Right cardiac atrium (tissue), 5 donors: ENCODE measurements at regions of chr11 and their contacts with region 1.

Region 1: GRCh38 chr11:95337175-95337957 is 106.4 kb upstream of the SESN3 start:
- DNase-seq: peak; percentile 71 to 93 (median 89)
- ATAC-seq: peak; percentile 75 to 83
- H3K4me3 ChIP-seq: peak overlapping the region; percentile 7
- H3K27ac ChIP-seq: peak overlapping the region; percentile 43
- H3K4me1 ChIP-seq: peaks cover 14% of the 10 kb centered on the region
- H3K27me3 ChIP-seq: no peaks in the 10 kb centered on the region

Region 2: DNA sequence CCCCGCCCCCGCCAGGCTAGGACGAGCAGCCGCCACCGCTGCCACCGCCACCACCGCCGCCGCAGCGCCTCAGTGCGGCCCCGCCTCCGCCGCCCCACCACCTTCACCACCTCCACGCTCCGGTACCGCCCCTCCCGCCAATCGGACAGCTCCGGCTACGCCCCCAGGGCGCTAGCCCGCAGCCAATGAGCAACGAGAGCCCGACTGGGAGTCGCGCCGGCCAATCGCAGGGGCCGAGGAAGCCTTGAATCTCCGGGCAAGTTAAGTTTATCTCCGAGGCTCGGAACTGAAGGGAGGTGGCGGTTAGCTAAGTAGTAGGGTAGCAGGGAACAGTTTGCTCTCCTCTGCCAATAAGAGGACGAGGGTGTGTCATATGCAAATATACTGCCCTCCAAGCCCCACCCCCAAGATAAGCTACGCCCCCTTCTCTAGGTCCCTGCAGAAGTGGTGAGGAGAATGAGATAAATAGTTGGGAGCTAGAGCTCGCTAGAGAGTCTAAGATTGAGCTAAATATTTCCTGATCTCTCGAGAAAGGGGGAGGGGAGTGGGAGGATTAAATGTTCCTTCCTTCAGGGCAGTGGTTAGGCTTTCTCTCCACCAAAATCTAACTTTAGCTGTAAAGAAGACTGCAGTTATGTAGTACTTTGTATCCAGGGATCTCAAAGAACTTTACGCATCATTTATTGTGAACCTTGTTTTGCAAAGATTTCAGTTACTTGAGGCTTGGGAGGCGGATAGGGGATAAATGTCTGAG is 106.1 kb before region 1 on chr11 and contains the start of gene SESN3:
- intact Hi-C with region 1: loop called in 1 of 4 experiments (anchors 10 kb)
- DNase-seq: peak; percentile 99
- ATAC-seq: peak; percentile 98 to 99
- H3K4me3 ChIP-seq: peak within 1 kb of the TSS; percentile 93
- H3K27ac ChIP-seq: peak within 1 kb of the TSS; percentile 96
- H3K4me1 ChIP-seq: no peaks in the 10 kb centered on the region
- H3K27me3 ChIP-seq: no peaks in the 10 kb centered on the region
- total RNA-seq, gene SESN3: 9.1 to 15.3 (median 12.0) TPM

Region 3: DNA sequence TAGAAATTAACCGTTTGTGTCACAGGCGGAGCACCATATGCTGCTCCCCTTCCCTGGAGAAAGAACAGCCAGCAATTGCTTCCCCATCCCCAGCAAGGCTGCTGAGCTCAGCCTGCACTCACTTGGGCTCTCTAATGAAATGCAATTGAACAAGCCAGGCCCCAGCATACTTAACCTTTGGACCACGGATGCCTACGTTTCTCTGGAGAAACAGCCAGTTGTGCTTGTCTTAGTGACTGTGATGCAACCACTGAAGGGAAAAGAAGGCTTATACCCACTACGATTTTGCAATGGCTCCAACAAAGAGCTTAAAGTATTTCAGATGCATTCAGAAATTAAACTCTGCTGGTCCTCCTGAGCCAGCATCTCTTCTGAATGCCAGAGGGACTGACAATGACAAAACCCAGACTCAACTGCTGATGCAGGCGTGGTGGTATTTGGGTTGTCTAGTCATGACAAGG is 55.0 kb before region 1 on chr11:
- intact Hi-C with region 1: no loop called
- DNase-seq: no peak
- ATAC-seq: no peak
- H3K4me3 ChIP-seq: no peak overlapping the region
- H3K27ac ChIP-seq: no peak overlapping the region
- H3K4me1 ChIP-seq: no peaks in the 10 kb centered on the region
- H3K27me3 ChIP-seq: no peaks in the 10 kb centered on the region

Region 4: DNA sequence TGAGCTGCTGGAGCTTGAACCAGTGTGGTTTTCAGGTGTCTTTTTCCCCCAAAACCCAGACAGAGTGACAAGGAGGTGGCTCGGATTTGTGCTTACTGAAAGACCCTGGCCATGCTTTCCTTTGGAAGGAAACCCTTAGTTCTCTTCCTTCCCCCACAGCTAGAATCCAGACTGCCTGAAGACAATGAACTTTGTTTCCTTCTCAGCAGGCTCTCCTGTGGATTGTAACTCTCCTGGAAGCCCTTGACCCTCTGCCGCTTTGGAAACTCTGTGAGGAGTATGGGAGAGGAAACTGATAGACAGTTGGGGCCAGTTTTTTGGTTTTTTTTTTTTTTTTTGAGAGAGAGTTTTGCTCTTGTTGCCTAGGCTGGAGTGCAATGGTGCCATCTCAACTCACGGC is 44.2 kb before region 1 on chr11:
- intact Hi-C with region 1: no loop called
- DNase-seq: no peak
- ATAC-seq: no peak
- H3K4me3 ChIP-seq: no peak overlapping the region
- H3K27ac ChIP-seq: no peak overlapping the region
- H3K4me1 ChIP-seq: no peaks in the 10 kb centered on the region
- H3K27me3 ChIP-seq: no peaks in the 10 kb centered on the region